ENCODE measurements at regions of chrX and their contacts with region 1.

Region 1: GRCh38 chrX:12894074-12895030 is 12.1 kb upstream of the TLR8 start:
- DNase-seq: peak; percentile 10 to 56 (median 35)
- ATAC-seq: peak; percentile 67
- H3K4me3 ChIP-seq: no peak overlapping the region
- H3K4me3 Mint-ChIP-seq: peak overlapping the region in 2 of 10 donors; percentile 44 to 51
- H3K27ac ChIP-seq: no peak overlapping the region
- H3K27ac Mint-ChIP-seq: peak overlapping the region in 5 of 9 donors; percentile 5 to 82 (median 77)
- H3K4me1 ChIP-seq: peaks cover 0 to 13% of the 10 kb centered on the region in 2 donors
- H3K4me1 Mint-ChIP-seq: peaks cover 4 to 56% (median 20%) of the 10 kb centered on the region in 7 donors
- H3K27me3 ChIP-seq: no peaks in the 10 kb centered on the region
- H3K27me3 Mint-ChIP-seq: no peaks in the 10 kb centered on the region

Region 2: DNA sequence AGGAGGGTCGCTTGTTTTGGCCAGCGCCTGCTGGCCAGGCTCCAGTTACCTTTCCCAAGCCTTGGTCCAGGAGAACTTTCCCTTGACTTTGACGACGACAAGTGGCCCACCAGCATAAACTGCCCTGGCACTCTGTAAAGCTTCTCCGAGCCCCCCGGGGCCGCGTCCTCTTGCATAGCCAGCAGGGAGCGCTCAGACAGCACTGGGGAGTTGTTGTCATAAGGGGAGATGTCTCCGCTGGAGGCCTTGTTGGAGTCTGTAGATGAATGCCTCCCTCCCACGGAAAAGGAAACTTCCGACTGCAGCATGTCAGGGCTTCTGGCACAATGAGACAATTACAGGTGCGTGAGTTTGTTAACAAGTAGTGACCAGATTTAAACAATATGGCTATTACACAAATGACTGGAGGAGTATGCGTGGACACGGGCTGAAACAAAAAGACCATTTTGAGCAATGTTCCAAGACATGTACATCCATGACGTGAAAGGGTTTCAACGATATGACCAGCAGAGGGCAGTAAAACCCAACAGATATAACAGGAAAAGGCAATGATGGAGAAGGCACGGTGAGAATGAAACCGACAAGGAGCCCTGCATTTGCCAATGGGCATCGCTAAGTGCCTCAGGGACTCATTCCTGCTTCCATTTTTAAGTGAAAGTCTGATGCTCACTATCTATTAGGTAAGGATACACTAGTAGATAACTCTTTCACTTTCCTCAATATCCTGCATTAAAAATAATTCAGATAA is 1750.2 kb before region 1 on chrX:
- CTCF ChIA-PET with region 1: no interaction called
- POLR2A ChIA-PET with region 1: no interaction called
- intact Hi-C with region 1: loop called in 1 of 2 experiments (anchors 10 kb)
- DNase-seq: peak in 8 of 9 donors; percentile 20 to 62 (median 52)
- ATAC-seq: peak; percentile 79
- H3K4me3 ChIP-seq: no peak overlapping the region
- H3K4me3 Mint-ChIP-seq: peak overlapping the region in 6 of 10 donors; percentile 10 to 59 (median 34)
- H3K27ac ChIP-seq: no peak overlapping the region
- H3K27ac Mint-ChIP-seq: no peak overlapping the region
- H3K4me1 ChIP-seq: no peaks in the 10 kb centered on the region
- H3K4me1 Mint-ChIP-seq: peaks cover 0 to 4% (median 3%) of the 10 kb centered on the region in 7 donors
- H3K27me3 ChIP-seq: no peaks in the 10 kb centered on the region
- H3K27me3 Mint-ChIP-seq: peaks cover 0 to 5% (median 0%) of the 10 kb centered on the region in 5 donors

Region 3: GRCh38 chrX:12701628-12702027 is 192.7 kb before region 1 on chrX:
- CTCF ChIA-PET with region 1: interaction called, 3 read pairs
- POLR2A ChIA-PET with region 1: no interaction called
- intact Hi-C with region 1: loop called in 1 of 2 experiments (anchors 2 kb)
- DNase-seq: peak in 2 of 9 donors; percentile 5 to 21
- ATAC-seq: no peak
- H3K4me3 ChIP-seq: no peak overlapping the region
- H3K4me3 Mint-ChIP-seq: no peak overlapping the region
- H3K27ac ChIP-seq: no peak overlapping the region
- H3K27ac Mint-ChIP-seq: peak overlapping the region in 1 of 9 donors; percentile 60
- H3K4me1 ChIP-seq: no peaks in the 10 kb centered on the region
- H3K4me1 Mint-ChIP-seq: peaks cover 0 to 4% (median 0%) of the 10 kb centered on the region in 7 donors
- H3K27me3 ChIP-seq: no peaks in the 10 kb centered on the region
- H3K27me3 Mint-ChIP-seq: peaks cover 5 to 14% (median 9%) of the 10 kb centered on the region in 5 donors

Region 4: GRCh38 chrX:12843668-12844279 is 50.6 kb before region 1 on chrX:
- CTCF ChIA-PET with region 1: no interaction called
- POLR2A ChIA-PET with region 1: interaction called, 3 read pairs
- intact Hi-C with region 1: loop called in 1 of 2 experiments (anchors 1 kb)
- DNase-seq: peak in 3 of 9 donors; percentile 2 to 5 (median 3)
- ATAC-seq: no peak
- H3K4me3 ChIP-seq: peak overlapping the region; percentile 46
- H3K4me3 Mint-ChIP-seq: peak overlapping the region; percentile 54 to 89 (median 80)
- H3K27ac ChIP-seq: peak overlapping the region; percentile 57
- H3K27ac Mint-ChIP-seq: peak overlapping the region; percentile 80 to 98 (median 92)
- H3K4me1 ChIP-seq: peaks cover 0 to 6% of the 10 kb centered on the region in 2 donors
- H3K4me1 Mint-ChIP-seq: peaks cover 0 to 16% (median 8%) of the 10 kb centered on the region in 7 donors
- H3K27me3 ChIP-seq: no peaks in the 10 kb centered on the region
- H3K27me3 Mint-ChIP-seq: no peaks in the 10 kb centered on the region

Region 5: DNA sequence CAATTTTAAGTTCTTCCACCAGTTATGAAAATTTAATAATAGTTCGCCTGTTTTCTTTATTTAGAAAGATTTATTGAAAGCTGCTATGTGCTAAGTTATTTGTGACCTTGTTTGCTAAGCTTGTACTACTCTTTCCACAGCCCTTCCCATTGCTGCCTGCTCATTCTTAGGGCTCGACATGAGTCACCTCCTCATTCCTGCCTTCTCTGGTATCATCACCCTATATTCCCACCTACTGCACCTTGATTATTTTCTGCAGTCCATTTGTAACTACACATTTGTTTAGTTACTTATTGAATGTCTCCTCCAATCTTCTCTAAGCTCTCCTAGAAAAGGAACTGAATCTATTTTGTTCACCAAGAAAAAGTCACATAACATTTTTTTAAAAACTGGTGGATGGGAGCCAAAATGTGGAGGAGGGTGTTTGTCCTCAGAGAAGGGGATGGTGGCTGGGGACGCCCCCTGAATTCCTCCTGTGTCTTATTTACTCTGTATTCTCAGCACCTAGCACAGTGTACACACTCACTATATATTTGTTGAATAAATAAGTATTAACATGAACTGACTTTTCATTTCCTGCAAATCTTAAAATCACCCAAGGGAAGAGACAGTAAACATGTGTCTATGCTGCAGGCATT is 790.9 kb after region 1 on chrX:
- CTCF ChIA-PET with region 1: no interaction called
- POLR2A ChIA-PET with region 1: no interaction called
- intact Hi-C with region 1: no loop called
- DNase-seq: no peak
- ATAC-seq: no peak
- H3K4me3 ChIP-seq: no peak overlapping the region
- H3K4me3 Mint-ChIP-seq: no peak overlapping the region
- H3K27ac ChIP-seq: no peak overlapping the region
- H3K27ac Mint-ChIP-seq: peak overlapping the region in 2 of 9 donors; percentile 17 to 71
- H3K4me1 ChIP-seq: peaks cover 0 to 2% of the 10 kb centered on the region in 2 donors
- H3K4me1 Mint-ChIP-seq: peaks cover under 1 to 21% (median 13%) of the 10 kb centered on the region in 7 donors
- H3K27me3 ChIP-seq: no peaks in the 10 kb centered on the region
- H3K27me3 Mint-ChIP-seq: no peaks in the 10 kb centered on the region

Measured in naive thymus-derived CD4-positive, alpha-beta T cell (primary cell).